ENCODE measurements at regions of chr6 and their contacts with region 1.

Region 1: DNA sequence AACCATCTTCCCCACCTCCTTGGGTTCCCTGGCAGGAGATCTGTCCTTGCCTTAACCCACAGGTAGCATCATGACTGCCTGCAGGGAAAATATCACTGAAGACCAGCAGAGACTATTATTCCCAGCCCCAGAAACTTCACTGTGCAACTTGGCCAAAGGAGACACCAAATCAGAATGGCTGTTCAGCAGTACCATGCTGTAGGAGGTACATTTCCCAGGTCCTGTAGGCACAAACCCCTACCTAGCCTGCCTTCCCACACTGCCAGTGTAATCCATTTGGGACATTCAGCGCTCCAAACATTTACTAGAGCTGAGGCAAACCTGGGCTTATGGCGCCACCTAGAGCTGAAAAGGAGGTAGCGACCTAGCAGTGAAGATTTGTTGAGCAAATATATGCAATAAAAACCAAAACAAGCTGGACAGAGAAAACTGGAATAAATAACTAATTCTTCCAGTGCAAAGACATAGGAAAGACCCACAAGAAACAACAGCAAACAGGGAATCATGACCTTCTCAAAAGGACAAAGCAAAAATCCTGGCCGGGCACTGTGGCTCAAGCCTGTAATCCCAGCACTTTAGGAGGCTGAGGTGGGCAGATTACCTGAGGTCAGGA is 60.3 kb downstream of the VTA1 start:
- DNase-seq: peak; percentile 71
- H3K4me3 ChIP-seq: no peak overlapping the region
- H3K27ac ChIP-seq: no peak overlapping the region
- H3K4me1 ChIP-seq: peaks cover 14% of the 10 kb centered on the region
- H3K27me3 ChIP-seq: no peaks in the 10 kb centered on the region
- CTCF ChIP-seq: peak; percentile 73
- POLR2A ChIP-seq: no peak

Region 2: GRCh38 chr6:142112451-142113061 is 94.8 kb before region 1 on chr6:
- CTCF ChIA-PET with region 1: interaction called, 18 read pairs
- POLR2A ChIA-PET with region 1: no interaction called
- dilution Hi-C with region 1: no loop called
- intact Hi-C with region 1: no loop called
- DNase-seq: peak; percentile 76
- H3K4me3 ChIP-seq: no peak overlapping the region
- H3K27ac ChIP-seq: no peak overlapping the region
- H3K4me1 ChIP-seq: no peaks in the 10 kb centered on the region
- H3K27me3 ChIP-seq: no peaks in the 10 kb centered on the region
- CTCF ChIP-seq: peak; percentile 57
- POLR2A ChIP-seq: no peak

Region 3: DNA sequence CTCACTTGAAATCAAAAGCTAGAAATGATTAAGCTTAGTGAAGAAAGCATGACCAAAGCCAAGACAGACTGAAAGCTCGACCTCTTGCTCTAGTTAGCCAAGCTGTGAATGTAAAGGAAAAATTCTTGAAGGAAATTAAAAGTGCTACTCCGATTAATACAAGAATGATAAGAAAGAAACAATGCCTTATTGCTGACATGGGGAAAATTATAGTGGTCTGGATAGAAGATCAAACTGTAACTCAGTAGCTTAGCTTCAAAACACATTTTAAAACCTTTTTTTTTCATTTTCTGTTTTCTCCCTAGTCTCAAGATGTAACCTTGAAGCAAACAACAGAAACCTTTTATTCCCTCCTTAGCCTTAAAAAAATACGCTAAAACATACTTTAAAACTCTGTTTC is 86.0 kb before region 1 on chr6:
- CTCF ChIA-PET with region 1: interaction called, 11 read pairs
- POLR2A ChIA-PET with region 1: no interaction called
- dilution Hi-C with region 1: no loop called
- intact Hi-C with region 1: no loop called
- DNase-seq: no peak
- H3K4me3 ChIP-seq: no peak overlapping the region
- H3K27ac ChIP-seq: no peak overlapping the region
- H3K4me1 ChIP-seq: no peaks in the 10 kb centered on the region
- H3K27me3 ChIP-seq: peaks cover 0 to 4% of the 10 kb centered on the region in 2 experiments
- CTCF ChIP-seq: no peak
- POLR2A ChIP-seq: no peak

Region 4: GRCh38 chr6:142146828-142147662 is 60.3 kb before region 1 on chr6 and contains the starts of genes NMBR and VTA1:
- CTCF ChIA-PET with region 1: interaction called, 39 read pairs
- POLR2A ChIA-PET with region 1: no interaction called
- dilution Hi-C with region 1: no loop called
- intact Hi-C with region 1: loop called (anchors 1 kb)
- DNase-seq: peak; percentile 99
- H3K4me3 ChIP-seq: peak within 1 kb of the TSS; percentile 77 to 92 (median 91)
- H3K27ac ChIP-seq: peak within 1 kb of the TSS; percentile 50
- H3K4me1 ChIP-seq: peaks cover 21% of the 10 kb centered on the region
- H3K27me3 ChIP-seq: no peaks in the 10 kb centered on the region
- CTCF ChIP-seq: peak; percentile 79 to 89
- POLR2A ChIP-seq: peak; percentile 90
- total RNA-seq, gene NMBR: not detected in 2 replicates
- total RNA-seq, gene VTA1: 40.9 and 45.8 TPM in 2 replicates

Region 5: DNA sequence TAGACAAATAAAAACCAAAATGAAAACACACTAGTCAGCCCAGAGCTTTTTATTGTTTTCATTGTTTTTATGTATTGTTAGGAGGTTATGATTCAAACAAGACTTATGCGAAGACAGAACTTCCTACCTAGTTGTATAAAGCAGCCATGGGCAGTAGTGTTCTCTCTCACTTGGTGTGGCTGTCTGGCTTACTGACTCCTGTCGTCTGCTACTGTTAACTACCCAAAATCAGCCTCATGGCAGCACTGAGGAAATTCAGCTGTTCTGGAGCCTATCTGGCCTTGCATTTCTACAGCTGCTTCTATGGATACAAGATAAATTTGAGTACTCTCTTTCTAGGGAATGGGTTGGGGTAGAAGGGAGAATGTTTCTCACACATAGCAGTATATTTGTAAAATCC is 39.9 kb before region 1 on chr6:
- CTCF ChIA-PET with region 1: interaction called, 17 read pairs
- POLR2A ChIA-PET with region 1: no interaction called
- dilution Hi-C with region 1: no loop called
- intact Hi-C with region 1: no loop called
- DNase-seq: no peak
- H3K4me3 ChIP-seq: no peak overlapping the region
- H3K27ac ChIP-seq: peak overlapping the region; percentile 71
- H3K4me1 ChIP-seq: peaks cover 17% of the 10 kb centered on the region
- H3K27me3 ChIP-seq: no peaks in the 10 kb centered on the region
- CTCF ChIP-seq: no peak
- POLR2A ChIP-seq: no peak

Region 6: GRCh38 chr6:142195862-142196541 is 11.4 kb before region 1 on chr6:
- CTCF ChIA-PET with region 1: interaction called, 25 read pairs
- POLR2A ChIA-PET with region 1: no interaction called
- dilution Hi-C with region 1: no loop called
- intact Hi-C with region 1: no loop called
- DNase-seq: peak; percentile 28
- H3K4me3 ChIP-seq: peak overlapping the region in 1 of 3 experiments; percentile 11
- H3K27ac ChIP-seq: peak overlapping the region; percentile 59
- H3K4me1 ChIP-seq: peaks cover 37% of the 10 kb centered on the region
- H3K27me3 ChIP-seq: no peaks in the 10 kb centered on the region
- CTCF ChIP-seq: no peak
- POLR2A ChIP-seq: no peak

Region 7: DNA sequence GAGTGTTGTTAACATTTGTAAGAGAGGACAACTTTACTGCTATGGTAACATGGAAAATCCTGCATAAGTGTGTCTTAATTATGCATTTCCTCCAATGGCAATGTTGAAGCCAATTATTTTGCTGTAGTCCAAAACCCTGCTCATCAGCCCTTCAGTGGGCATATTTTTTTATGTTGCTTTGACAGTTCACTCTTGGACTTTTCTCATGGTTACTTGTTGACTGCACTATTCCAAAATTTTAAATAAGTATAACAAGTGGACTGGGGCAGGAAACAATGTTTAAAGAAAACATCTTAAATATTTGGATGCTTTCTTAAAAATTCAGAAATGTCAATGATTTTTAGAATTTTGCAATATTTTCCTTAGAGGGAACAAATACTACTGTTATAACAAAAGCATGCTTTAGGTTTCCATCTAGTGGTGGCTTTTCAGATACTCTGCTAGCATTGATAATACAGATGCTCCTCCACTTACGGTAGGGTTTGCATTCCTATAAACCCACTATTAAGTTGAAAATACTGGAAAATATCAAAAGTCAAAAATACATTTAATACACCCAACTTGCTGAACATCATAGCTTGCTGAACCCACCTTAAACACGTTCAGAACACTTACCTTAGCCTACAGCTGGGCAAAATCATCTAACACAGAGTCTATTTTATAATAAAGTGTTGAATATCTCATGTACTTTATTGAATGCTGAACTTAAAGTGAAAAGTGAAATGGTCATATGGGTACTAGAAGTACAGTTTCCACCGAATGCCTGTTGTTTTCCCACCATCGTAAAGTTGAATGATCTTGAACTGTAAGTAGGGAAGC is 180.8 kb after region 1 on chr6:
- CTCF ChIA-PET with region 1: interaction called, 26 read pairs
- POLR2A ChIA-PET with region 1: no interaction called
- dilution Hi-C with region 1: no loop called
- intact Hi-C with region 1: loop called (anchors 1 kb)
- DNase-seq: peak; percentile 81
- H3K4me3 ChIP-seq: no peak overlapping the region
- H3K27ac ChIP-seq: peak overlapping the region; percentile 11
- H3K4me1 ChIP-seq: peaks cover 7% of the 10 kb centered on the region
- H3K27me3 ChIP-seq: no peaks in the 10 kb centered on the region
- CTCF ChIP-seq: peak; percentile 47 to 50
- POLR2A ChIP-seq: no peak